Activated CD8-positive, alpha-beta T cell treated with anti-CD3 and anti-CD28 coated beads for 36 hours (primary cell): ENCODE measurements at regions of chr3 and their contacts with region 1.

Region 1: DNA sequence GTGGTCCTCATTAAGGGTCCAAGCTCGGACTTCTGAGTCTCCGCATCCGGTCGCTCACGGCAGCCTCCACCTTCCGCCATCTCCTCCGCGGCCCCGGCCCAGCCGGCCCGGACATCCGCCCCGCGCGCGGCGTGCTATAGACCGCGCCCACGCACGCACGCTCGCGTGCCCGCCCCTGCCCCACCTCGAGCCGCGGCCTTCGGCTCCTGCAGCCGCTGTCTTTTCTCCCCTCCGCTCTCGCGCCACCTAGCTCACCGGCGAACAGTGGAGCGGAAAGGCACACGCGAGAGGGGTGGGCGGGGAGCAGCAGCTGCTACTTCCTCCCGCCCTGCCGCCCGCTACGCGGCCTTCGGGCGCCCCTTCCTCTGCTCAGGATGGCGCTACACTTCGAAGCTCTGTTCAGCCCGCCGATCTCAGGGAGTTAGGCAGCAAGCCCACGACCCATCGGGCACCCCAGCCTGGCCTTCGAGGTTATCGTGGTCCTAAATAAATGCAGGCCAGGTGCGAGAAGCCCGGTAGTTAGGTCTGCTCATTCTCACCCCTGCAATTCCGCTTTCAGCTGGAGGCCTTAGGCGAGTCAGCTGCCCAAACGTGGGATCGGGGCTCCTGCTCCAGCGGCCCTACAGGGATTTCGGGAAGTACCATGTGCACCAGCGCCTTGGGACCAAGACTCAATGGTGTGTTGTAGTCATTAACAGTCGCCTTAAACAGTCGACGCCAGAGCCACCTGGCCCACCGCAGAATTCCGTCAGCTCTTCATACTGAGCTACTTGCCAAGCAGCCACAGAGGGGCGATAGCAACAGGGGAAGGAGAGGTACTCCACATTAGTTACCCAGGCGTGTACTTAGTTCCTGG is at the start of gene USP4:
- DNase-seq: peak; percentile 97
- ATAC-seq: peak; percentile 86
- H3K4me3 Mint-ChIP-seq: peak within 1 kb of the TSS; percentile 97
- H3K27ac Mint-ChIP-seq: peak within 1 kb of the TSS; percentile 96
- H3K4me1 Mint-ChIP-seq: peaks cover 40% of the 10 kb centered on the region
- H3K27me3 Mint-ChIP-seq: no peaks in the 10 kb centered on the region
- CTCF ChIP-seq: no peak
- total RNA-seq, gene USP4: 62.4 to 67.8 TPM

Region 2: DNA sequence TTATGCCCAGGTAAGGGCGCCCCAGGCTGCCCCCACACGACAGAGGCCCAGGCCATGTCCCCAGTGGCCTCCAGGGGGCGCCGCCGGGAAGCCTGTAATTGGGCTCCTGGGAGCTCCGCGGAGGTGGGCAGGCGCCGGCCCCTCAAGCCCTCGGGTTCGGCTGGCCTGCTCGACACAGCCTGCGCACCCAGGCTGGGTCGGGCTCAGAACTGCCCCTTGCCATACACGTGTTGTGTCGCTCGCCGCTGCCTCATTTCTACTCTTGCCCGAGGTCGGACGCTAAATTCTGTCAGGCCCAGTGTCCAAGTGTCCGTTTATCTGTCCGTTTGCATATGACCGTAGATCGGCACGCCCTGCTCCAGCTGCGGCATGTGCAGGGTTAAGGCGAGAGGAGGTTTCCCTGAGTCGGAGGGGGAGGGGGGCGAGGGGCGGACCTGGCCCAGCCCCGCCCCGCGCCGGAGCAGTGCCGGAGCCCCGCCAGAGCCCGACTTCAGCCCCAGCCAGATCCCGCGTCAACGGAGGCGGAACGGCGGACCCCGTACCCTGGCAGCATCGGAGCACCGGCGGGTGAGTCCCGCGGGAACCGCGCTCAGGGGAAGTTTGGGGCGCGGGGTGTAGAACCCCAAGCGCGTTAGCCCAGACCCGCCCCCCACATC is 168.9 kb before region 1 on chr3 and contains the start of gene KLHDC8B:
- CTCF ChIA-PET with region 1: interaction called, 16 read pairs
- POLR2A ChIA-PET with region 1: interaction called, 3 read pairs
- intact Hi-C with region 1: no loop called
- DNase-seq: peak; percentile 93
- ATAC-seq: peak; percentile 90
- H3K4me3 Mint-ChIP-seq: peak within 1 kb of the TSS; percentile 76
- H3K27ac Mint-ChIP-seq: peak within 1 kb of the TSS; percentile 71
- H3K4me1 Mint-ChIP-seq: peaks cover 16% of the 10 kb centered on the region
- H3K27me3 Mint-ChIP-seq: no peaks in the 10 kb centered on the region
- CTCF ChIP-seq: peak; percentile 98
- total RNA-seq, gene KLHDC8B: 1.3 to 2.2 TPM

Region 3: GRCh38 chr3:49358217-49358883 is 18.2 kb after region 1 on chr3 and contains the start of gene GPX1:
- CTCF ChIA-PET with region 1: interaction called, 18 read pairs
- POLR2A ChIA-PET with region 1: interaction called, 18 read pairs
- intact Hi-C with region 1: no loop called
- DNase-seq: peak; percentile 92
- ATAC-seq: peak; percentile 79
- H3K4me3 Mint-ChIP-seq: peak within 1 kb of the TSS; percentile 88
- H3K27ac Mint-ChIP-seq: peak within 1 kb of the TSS; percentile 97
- H3K4me1 Mint-ChIP-seq: peaks cover 23% of the 10 kb centered on the region
- H3K27me3 Mint-ChIP-seq: no peaks in the 10 kb centered on the region
- CTCF ChIP-seq: no peak
- total RNA-seq, gene GPX1: 201 to 202 TPM

Region 4: DNA sequence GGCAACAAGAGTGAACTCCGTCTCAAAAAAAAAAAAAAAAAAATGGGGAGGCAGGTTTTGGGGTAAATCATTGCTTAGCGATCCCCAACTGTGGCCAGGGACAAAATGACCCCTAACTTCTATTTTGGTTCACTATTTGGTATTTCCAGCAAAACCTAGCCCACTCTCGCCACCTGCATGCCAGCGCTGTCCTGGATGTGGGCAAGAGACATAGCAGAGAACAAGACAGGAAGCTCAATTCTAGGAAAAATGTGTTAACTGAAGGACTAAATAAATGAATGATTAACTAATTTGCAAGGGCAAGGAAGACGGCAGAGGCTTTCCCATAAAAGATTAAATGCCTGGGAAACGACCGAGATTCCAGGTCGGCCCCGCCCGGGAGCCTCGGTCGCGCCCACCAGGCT is 88.5 kb after region 1 on chr3:
- CTCF ChIA-PET with region 1: no interaction called
- POLR2A ChIA-PET with region 1: interaction called, 11 read pairs
- intact Hi-C with region 1: no loop called
- DNase-seq: peak; percentile 28
- ATAC-seq: peak; percentile 2
- H3K4me3 Mint-ChIP-seq: peak overlapping the region; percentile 84
- H3K27ac Mint-ChIP-seq: peak overlapping the region; percentile 94
- H3K4me1 Mint-ChIP-seq: peaks cover 18% of the 10 kb centered on the region
- H3K27me3 Mint-ChIP-seq: no peaks in the 10 kb centered on the region
- CTCF ChIP-seq: no peak

Region 5: GRCh38 chr3:49454458-49454857 is 114.3 kb after region 1 on chr3:
- CTCF ChIA-PET with region 1: interaction called, 23 read pairs
- POLR2A ChIA-PET with region 1: interaction called, 5 read pairs
- intact Hi-C with region 1: loop called (anchors 1 kb)
- DNase-seq: peak; percentile 36
- ATAC-seq: peak; percentile 67
- H3K4me3 Mint-ChIP-seq: no peak overlapping the region
- H3K27ac Mint-ChIP-seq: no peak overlapping the region
- H3K4me1 Mint-ChIP-seq: no peaks in the 10 kb centered on the region
- H3K27me3 Mint-ChIP-seq: no peaks in the 10 kb centered on the region
- CTCF ChIP-seq: peak; percentile 33